Dorsolateral prefrontal cortex (tissue), 120 donors: ENCODE measurements at regions of chr20 and their contacts with region 1.

Region 1: GRCh38 chr20:9912858-9913434 is 74.1 kb upstream of the PAK5 start:
- DNase-seq: peak in 8 of 10 donors; percentile 15 to 73 (median 46)
- H3K4me3 ChIP-seq: no peak overlapping the region
- H3K27ac ChIP-seq: no peak overlapping the region
- H3K27me3 ChIP-seq: peaks cover 0 to 9% (median 0%) of the 10 kb centered on the region in 45 donors
- CTCF ChIP-seq: peak; percentile 69 to 94 (median 84)

Region 2: DNA sequence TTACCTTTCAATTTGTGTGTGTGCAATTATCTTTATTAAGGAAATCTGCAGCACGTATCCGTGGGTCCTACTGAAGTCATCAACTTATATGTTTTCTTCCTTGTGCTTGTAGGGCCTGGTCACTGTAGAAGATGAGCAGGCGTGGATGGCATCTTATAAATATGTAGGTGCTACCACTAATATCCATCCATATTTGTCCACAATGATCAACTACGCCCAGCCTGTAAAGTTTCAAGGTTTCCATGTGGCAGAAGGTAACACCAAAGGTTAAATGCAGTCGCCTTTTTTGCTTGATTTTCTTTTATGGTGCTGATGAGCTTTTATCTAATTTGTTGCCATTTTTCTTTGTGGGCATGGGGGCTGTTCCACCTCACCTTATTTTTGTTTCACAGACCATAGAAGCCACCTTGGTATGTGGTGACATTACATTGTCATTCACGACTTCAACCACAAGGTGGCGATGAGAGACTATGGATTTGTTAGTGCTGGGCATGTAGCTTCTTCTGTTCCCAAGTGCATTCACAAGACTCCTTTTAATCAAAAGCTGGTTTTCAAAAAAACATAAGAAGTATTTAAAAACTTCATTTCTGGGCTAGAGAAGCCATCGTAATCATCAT is 505.0 kb before region 1 on chr20:
- intact Hi-C with region 1: loop called (anchors 5 to 10 kb)
- DNase-seq: peak in 7 of 10 donors; percentile 52 to 89 (median 59)
- H3K4me3 ChIP-seq: no peak overlapping the region
- H3K27ac ChIP-seq: peak overlapping the region in 1 of 59 donors; percentile 70
- H3K27me3 ChIP-seq: no peaks in the 10 kb centered on the region
- CTCF ChIP-seq: peak; percentile 74 to 98 (median 91)

Region 3: GRCh38 chr20:9705722-9706476 is 207.0 kb before region 1 on chr20:
- intact Hi-C with region 1: no loop called
- DNase-seq: peak in 1 of 10 donors; percentile 26
- H3K4me3 ChIP-seq: no peak overlapping the region
- H3K27ac ChIP-seq: no peak overlapping the region
- H3K27me3 ChIP-seq: peaks cover 0 to 5% (median 0%) of the 10 kb centered on the region in 45 donors
- CTCF ChIP-seq: no peak